PC-3 (cell line): ENCODE measurements at regions of chr11 and their contacts with region 1.

Region 1: GRCh38 chr11:18526521-18527296 is at the start of gene TSG101:
- DNase-seq: peak; percentile 89
- ATAC-seq: peak; percentile 89
- H3K4me3 ChIP-seq: peak within 1 kb of the TSS; percentile 81
- H3K27ac ChIP-seq: peak within 1 kb of the TSS; percentile 92
- H3K4me1 ChIP-seq: peaks cover 32% of the 10 kb centered on the region
- H3K27me3 ChIP-seq: no peaks in the 10 kb centered on the region
- CTCF ChIP-seq: no peak
- total RNA-seq, gene TSG101: 42.2 and 46.9 TPM in 2 replicates

Region 2: DNA sequence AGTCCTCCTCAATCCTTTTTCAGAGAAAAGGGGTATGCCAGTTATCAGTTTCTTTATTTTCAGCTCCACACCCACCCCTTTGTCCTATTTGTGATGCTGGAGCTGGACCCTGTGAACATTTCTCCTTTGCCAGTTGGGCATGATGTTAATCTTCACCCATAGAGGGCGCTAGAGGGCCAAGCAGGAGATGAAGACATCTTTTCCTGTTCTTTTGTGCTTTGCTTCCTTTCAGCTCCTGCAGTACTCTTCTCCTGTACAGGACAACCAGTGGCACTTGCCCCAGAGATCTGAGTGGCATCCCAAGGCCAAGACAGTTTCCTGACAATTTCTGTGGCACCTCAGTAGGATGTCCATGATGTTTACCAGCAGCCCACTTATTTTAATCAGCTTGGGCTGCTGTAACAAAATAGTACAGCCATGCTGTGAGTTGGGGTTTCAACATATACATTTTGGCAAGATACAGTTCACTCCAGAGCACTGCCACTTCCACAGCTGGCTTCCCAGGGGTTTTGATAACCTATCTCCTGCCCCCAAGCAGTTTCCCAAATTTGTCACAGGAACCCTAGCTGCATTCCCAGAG is 282.8 kb before region 1 on chr11:
- CTCF ChIA-PET with region 1: no interaction called
- POLR2A ChIA-PET with region 1: no interaction called
- intact Hi-C with region 1: loop called (anchors 10 kb)
- DNase-seq: peak; percentile 73
- ATAC-seq: peak; percentile 74
- H3K4me3 ChIP-seq: no peak overlapping the region
- H3K27ac ChIP-seq: no peak overlapping the region
- H3K4me1 ChIP-seq: no peaks in the 10 kb centered on the region
- H3K27me3 ChIP-seq: peaks cover 18% of the 10 kb centered on the region; the same call in 1 of the 2 replicates
- CTCF ChIP-seq: peak; percentile 86

Region 3: GRCh38 chr11:18329196-18329870 is 197.4 kb before region 1 on chr11:
- CTCF ChIA-PET with region 1: no interaction called
- POLR2A ChIA-PET with region 1: no interaction called
- intact Hi-C with region 1: no loop called
- DNase-seq: peak; percentile 65
- ATAC-seq: peak; percentile 83
- H3K4me3 ChIP-seq: peak overlapping the region; percentile 48; the same call in 1 of the 2 replicates
- H3K27ac ChIP-seq: peak overlapping the region; percentile 71
- H3K4me1 ChIP-seq: peaks cover 24% of the 10 kb centered on the region
- H3K27me3 ChIP-seq: no peaks in the 10 kb centered on the region
- CTCF ChIP-seq: no peak

Region 4: GRCh38 chr11:18395735-18396504 is 130.8 kb before region 1 on chr11:
- CTCF ChIA-PET with region 1: no interaction called
- POLR2A ChIA-PET with region 1: interaction called, 5 read pairs
- intact Hi-C with region 1: loop called (anchors 1 kb)
- DNase-seq: peak; percentile 98
- ATAC-seq: peak; percentile 77
- H3K4me3 ChIP-seq: peak overlapping the region; percentile 93
- H3K27ac ChIP-seq: peak overlapping the region; percentile 82
- H3K4me1 ChIP-seq: peaks cover 22% of the 10 kb centered on the region
- H3K27me3 ChIP-seq: no peaks in the 10 kb centered on the region
- CTCF ChIP-seq: no peak

Region 5: GRCh38 chr11:18457431-18457830 is 69.3 kb before region 1 on chr11:
- CTCF ChIA-PET with region 1: no interaction called
- POLR2A ChIA-PET with region 1: no interaction called
- intact Hi-C with region 1: no loop called
- DNase-seq: peak; percentile 55
- ATAC-seq: peak; percentile 81
- H3K4me3 ChIP-seq: no peak overlapping the region
- H3K27ac ChIP-seq: no peak overlapping the region
- H3K4me1 ChIP-seq: peaks cover 17% of the 10 kb centered on the region
- H3K27me3 ChIP-seq: no peaks in the 10 kb centered on the region
- CTCF ChIP-seq: no peak

Region 6: GRCh38 chr11:18492888-18493287 is 33.8 kb before region 1 on chr11:
- CTCF ChIA-PET with region 1: no interaction called
- POLR2A ChIA-PET with region 1: interaction called, 4 read pairs
- intact Hi-C with region 1: loop called (anchors 2 kb)
- DNase-seq: peak; percentile 52
- ATAC-seq: peak; percentile 10
- H3K4me3 ChIP-seq: peak overlapping the region; percentile 33
- H3K27ac ChIP-seq: peak overlapping the region; percentile 87
- H3K4me1 ChIP-seq: peaks cover 62% of the 10 kb centered on the region
- H3K27me3 ChIP-seq: no peaks in the 10 kb centered on the region
- CTCF ChIP-seq: no peak